ENCODE measurements at regions of chr18 and their contacts with region 1.

Region 1: GRCh38 chr18:27921392-27921791 is 255.5 kb downstream of the CDH2 start:
- DNase-seq: no peak
- H3K4me3 ChIP-seq: no peak overlapping the region
- H3K27ac ChIP-seq: no peak overlapping the region
- H3K4me1 ChIP-seq: no peaks in the 10 kb centered on the region
- CTCF ChIP-seq: no peak

Region 2: DNA sequence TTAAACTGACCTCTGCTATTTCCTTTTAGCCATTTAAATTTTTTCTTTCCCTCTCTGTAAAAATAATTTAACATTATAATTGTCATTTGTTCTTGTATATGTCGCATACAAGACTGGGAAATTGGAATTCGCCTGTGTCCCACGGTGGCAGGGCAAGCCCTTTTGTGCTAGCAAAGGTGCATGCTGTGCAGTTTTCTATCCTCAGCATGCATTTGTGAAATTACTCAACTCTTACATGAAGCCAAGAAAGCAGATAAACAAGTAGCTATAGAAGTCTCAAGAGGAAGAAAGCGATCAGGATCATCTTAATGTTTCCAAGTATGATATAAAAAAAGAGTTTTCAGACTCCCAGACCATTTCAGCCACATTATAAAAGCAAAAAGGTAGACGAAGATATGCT is 343.6 kb before region 1 on chr18:
- CTCF ChIA-PET with region 1: no interaction called
- POLR2A ChIA-PET with region 1: no interaction called
- intact Hi-C with region 1: no loop called
- DNase-seq: no peak
- H3K4me3 ChIP-seq: no peak overlapping the region
- H3K27ac ChIP-seq: no peak overlapping the region
- H3K4me1 ChIP-seq: no peaks in the 10 kb centered on the region
- CTCF ChIP-seq: no peak

Region 3: GRCh38 chr18:27931535-27931934 is 10.1 kb after region 1 on chr18:
- CTCF ChIA-PET with region 1: no interaction called
- POLR2A ChIA-PET with region 1: interaction called, 10 read pairs
- intact Hi-C with region 1: no loop called
- DNase-seq: no peak
- H3K4me3 ChIP-seq: no peak overlapping the region
- H3K27ac ChIP-seq: no peak overlapping the region
- H3K4me1 ChIP-seq: no peaks in the 10 kb centered on the region
- CTCF ChIP-seq: no peak

Region 4: DNA sequence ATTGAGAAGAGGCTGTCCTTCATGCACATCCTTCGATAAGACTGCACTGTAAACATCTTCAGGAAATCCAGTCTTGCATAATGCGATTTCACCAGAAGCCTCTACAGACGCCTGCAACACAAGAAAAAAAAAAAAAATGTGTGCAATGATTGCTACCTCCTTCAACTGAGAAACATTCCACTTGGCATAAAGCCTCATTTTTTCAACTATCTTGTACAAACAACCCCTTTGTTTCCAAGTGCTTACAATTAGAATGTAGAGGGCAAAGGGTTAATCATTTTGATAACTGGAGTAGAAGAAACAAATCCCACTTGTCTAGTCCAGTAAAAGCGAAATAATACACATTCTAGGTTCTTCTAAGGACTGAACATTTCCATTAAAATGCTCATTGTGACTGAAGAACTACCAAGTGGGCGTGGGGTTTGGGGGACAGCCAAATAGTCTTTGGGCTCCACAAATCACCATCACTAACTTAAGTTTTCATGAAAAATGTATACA is 226.3 kb after region 1 on chr18:
- CTCF ChIA-PET with region 1: no interaction called
- POLR2A ChIA-PET with region 1: no interaction called
- intact Hi-C with region 1: no loop called
- DNase-seq: no peak
- H3K4me3 ChIP-seq: no peak overlapping the region
- H3K27ac ChIP-seq: no peak overlapping the region
- H3K4me1 ChIP-seq: no peaks in the 10 kb centered on the region
- CTCF ChIP-seq: no peak